B cell (primary cell): ENCODE measurements at regions of chr20 and their contacts with region 1.

Region 1: DNA sequence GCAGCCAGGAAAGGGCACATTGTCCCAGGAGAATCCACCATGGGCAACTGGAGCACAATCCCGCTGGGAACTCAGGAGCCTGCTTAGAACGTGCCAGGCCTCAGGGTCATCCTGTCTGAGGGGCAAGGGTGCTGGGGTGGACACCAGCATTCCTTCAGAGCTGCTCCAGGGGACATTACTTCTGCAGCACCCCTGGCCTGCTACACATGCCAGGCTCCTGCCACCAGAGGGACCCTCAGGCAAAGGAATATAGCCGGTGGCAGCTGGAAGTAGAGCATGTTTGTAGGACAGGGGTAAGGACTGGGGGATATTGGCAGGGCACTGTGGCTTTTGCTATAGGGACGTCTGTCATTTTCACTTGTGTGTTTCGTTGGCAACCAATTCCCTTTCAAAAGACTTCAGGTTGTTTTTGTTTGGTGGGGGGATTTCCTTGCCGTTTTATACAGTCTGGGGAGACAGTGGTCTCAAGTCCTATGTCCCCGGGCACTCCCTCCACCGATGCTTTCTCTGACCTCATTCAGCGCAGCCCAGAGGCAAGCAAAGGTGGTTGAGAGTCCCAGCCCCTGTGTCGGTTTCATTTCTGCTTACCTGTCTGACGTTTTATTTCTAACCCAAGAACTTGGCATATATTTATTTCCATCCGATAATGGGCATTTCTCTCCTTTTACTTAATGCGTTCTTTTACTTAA is 130.8 kb downstream of the JPH2 start:
- DNase-seq: no peak
- ATAC-seq: peak; percentile 41
- H3K4me3 ChIP-seq: no peak overlapping the region
- H3K4me3 Mint-ChIP-seq: no peak overlapping the region
- H3K27ac ChIP-seq: no peak overlapping the region
- H3K27ac Mint-ChIP-seq: no peak overlapping the region
- H3K4me1 ChIP-seq: no peaks in the 10 kb centered on the region
- H3K4me1 Mint-ChIP-seq: no peaks in the 10 kb centered on the region
- H3K27me3 ChIP-seq: no peaks in the 10 kb centered on the region
- H3K27me3 Mint-ChIP-seq: peaks cover 8% of the 10 kb centered on the region
- CTCF ChIP-seq: no peak

Region 2: GRCh38 chr20:44080646-44081267 is 24.6 kb after region 1 on chr20:
- CTCF ChIA-PET with region 1: interaction called, 55 read pairs
- POLR2A ChIA-PET with region 1: no interaction called
- intact Hi-C with region 1: loop called (anchors 1 kb)
- DNase-seq: peak; percentile 81
- ATAC-seq: peak; percentile 97
- H3K4me3 ChIP-seq: no peak overlapping the region
- H3K4me3 Mint-ChIP-seq: no peak overlapping the region
- H3K27ac ChIP-seq: no peak overlapping the region
- H3K27ac Mint-ChIP-seq: peak overlapping the region; percentile 26
- H3K4me1 ChIP-seq: no peaks in the 10 kb centered on the region
- H3K4me1 Mint-ChIP-seq: peaks cover 8% of the 10 kb centered on the region
- H3K27me3 ChIP-seq: no peaks in the 10 kb centered on the region
- H3K27me3 Mint-ChIP-seq: no peaks in the 10 kb centered on the region
- CTCF ChIP-seq: peak; percentile 99